Activated CD4-positive, alpha-beta T cell treated with anti-CD3 and anti-CD28 coated beads, Interleukin-2, amount 10 ng/mL, durations not matched to agents 24 days and 14 days (primary cell): ENCODE measurements at regions of chr1 and their contacts with region 1.

Region 1: GRCh38 chr1:202615501-202616354 is 94.5 kb downstream of the SYT2 start:
- DNase-seq: no peak
- H3K4me3 Mint-ChIP-seq: peak overlapping the region; percentile 5
- H3K27ac Mint-ChIP-seq: peak overlapping the region; percentile 5
- H3K4me1 Mint-ChIP-seq: peaks cover 18% of the 10 kb centered on the region
- H3K27me3 Mint-ChIP-seq: peaks cover 17% of the 10 kb centered on the region

Region 2: GRCh38 chr1:202565890-202566602 is 49.7 kb before region 1 on chr1:
- intact Hi-C with region 1: loop called (anchors 10 kb)
- DNase-seq: no peak
- H3K4me3 Mint-ChIP-seq: no peak overlapping the region
- H3K27ac Mint-ChIP-seq: no peak overlapping the region
- H3K4me1 Mint-ChIP-seq: peaks cover 21% of the 10 kb centered on the region
- H3K27me3 Mint-ChIP-seq: no peaks in the 10 kb centered on the region